ENCODE measurements at regions of chr12 and their contacts with region 1.

Region 1: DNA sequence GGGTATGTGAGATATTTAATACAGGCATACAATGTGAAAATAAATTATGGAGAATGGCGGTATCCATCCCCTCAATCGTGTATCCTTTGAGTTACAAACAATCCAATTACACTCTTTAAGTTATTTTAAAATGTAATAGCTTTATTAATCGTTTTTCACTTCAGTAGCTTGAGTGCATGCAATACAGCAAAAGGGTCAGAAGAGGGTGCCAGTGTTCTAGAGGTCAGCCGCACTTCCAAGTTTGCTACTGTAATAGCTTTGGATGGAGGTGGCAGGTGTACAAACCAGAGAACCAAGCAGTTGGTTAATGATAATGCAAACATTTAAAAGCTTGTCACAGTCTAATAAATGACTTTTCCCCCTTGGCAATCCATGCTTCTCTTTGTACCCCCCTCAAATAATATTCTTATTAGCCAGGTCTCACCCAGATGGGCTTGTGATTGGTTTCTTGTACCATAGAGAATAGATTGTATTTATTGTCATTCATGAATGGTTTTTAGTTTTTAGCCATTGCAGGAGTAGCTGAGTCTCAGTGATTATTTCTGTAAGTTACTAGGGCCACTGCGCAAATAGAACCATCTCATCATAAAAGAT is 127.0 kb downstream of the ERC1 start:
- DNase-seq: peak; percentile 19
- H3K4me3 ChIP-seq: no peak overlapping the region
- CTCF ChIP-seq: peak; percentile 83

Region 2: GRCh38 chr12:1102115-1102514 is 16.0 kb before region 1 on chr12:
- CTCF ChIA-PET with region 1: interaction called, 30 read pairs
- POLR2A ChIA-PET with region 1: no interaction called
- DNase-seq: no peak
- H3K4me3 ChIP-seq: no peak overlapping the region
- CTCF ChIP-seq: no peak

Region 3: GRCh38 chr12:1282670-1283335 is 164.7 kb after region 1 on chr12:
- CTCF ChIA-PET with region 1: interaction called, 10 read pairs
- POLR2A ChIA-PET with region 1: no interaction called
- DNase-seq: no peak
- H3K4me3 ChIP-seq: no peak overlapping the region
- CTCF ChIP-seq: no peak

Region 4: DNA sequence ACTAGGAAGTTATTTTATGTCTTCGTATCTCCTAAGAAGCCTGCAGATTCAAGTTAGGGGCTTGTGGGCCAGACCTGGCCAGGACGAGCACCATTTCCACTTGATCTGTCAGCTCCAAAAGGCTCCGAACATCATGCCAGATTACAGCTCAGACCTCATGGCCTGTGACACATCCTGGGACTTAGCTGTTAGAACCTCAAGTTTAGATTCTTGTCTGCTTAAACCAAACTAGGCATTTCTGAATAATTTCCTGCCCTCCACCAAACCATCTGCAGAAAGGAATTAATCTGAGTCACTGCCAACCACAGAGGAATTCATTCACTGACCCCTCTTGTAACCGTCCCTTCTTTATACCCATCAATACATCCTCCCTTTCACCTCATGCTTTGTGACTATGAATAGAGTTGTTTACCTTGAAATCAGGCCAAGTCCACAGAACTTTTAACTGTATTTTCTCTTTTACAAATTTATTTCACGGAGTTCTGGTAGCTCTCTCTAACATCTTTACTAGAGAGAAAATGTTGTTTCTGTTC is 356.0 kb after region 1 on chr12:
- CTCF ChIA-PET with region 1: interaction called, 32 read pairs
- POLR2A ChIA-PET with region 1: no interaction called
- DNase-seq: peak; percentile 93
- H3K4me3 ChIP-seq: peak overlapping the region; percentile 36
- CTCF ChIP-seq: no peak

Region 5: GRCh38 chr12:1562813-1563407 is 444.8 kb after region 1 on chr12:
- CTCF ChIA-PET with region 1: interaction called, 15 read pairs
- POLR2A ChIA-PET with region 1: no interaction called
- DNase-seq: no peak
- H3K4me3 ChIP-seq: no peak overlapping the region
- CTCF ChIP-seq: no peak

Region 6: DNA sequence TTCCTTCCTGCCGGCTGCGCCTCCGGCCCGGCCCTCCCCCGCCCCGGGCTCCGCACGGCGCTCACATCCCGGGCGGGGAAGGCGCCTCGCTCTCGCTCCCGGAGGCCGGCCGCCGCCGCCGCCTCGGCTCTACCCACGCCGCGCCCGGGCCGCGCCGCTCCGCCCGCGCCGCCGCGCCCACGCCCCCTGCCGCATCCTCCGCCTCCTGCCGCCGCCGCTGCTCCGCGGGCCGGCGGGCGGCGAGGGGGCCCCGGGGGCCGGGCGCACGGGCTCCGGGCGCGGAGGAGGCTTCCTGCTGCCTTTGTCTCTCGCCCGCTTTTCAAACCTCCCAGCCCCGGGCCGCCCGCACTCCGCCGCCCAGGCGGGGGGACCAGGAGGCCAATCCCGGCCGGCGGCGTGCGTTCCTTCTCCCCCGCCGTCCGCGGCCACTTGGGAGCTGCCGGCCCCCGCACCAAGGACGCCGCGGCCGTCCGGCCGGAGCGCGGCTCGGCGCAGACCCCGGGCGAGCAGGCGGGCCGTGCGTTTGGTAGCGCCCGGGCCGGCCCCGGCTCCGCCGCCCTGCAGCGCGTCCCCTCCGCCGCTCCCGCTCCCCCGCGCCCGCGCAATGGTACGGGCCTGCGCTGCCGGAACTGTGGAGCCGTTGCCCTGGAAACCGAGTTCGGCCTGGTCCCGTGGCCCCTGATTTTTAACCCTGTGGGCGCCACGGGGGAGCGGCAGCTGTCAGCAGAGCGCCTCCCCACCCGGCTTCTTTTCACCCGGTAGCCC is 476.4 kb after region 1 on chr12 and contains the start of gene FBXL14:
- CTCF ChIA-PET with region 1: interaction called, 67 read pairs
- POLR2A ChIA-PET with region 1: interaction called, 3 read pairs
- DNase-seq: no peak
- H3K4me3 ChIP-seq: peak within 1 kb of the TSS; percentile 74
- CTCF ChIP-seq: no peak

Region 7: GRCh38 chr12:1634590-1635191 is 516.6 kb after region 1 on chr12:
- CTCF ChIA-PET with region 1: interaction called, 24 read pairs
- POLR2A ChIA-PET with region 1: no interaction called
- DNase-seq: no peak
- H3K4me3 ChIP-seq: no peak overlapping the region
- CTCF ChIP-seq: peak; percentile 94

Measured in AG04449 (cell line).